Activated CD4-positive, alpha-beta T cell treated with anti-CD3 and anti-CD28 coated beads for 36 hours (primary cell): ENCODE measurements at regions of chr11 and their contacts with region 1.

Region 1: GRCh38 chr11:72030472-72031045 is 31.9 kb downstream of the IL18BP start:
- DNase-seq: no peak
- ATAC-seq: no peak
- H3K4me3 Mint-ChIP-seq: no peak overlapping the region
- H3K27ac Mint-ChIP-seq: peak overlapping the region; percentile 43
- H3K4me1 Mint-ChIP-seq: peaks cover 50% of the 10 kb centered on the region
- H3K27me3 Mint-ChIP-seq: no peaks in the 10 kb centered on the region

Region 2: GRCh38 chr11:71977743-71978418 is 52.7 kb before region 1 on chr11:
- CTCF ChIA-PET with region 1: interaction called, 18 read pairs
- POLR2A ChIA-PET with region 1: no interaction called
- intact Hi-C with region 1: no loop called
- DNase-seq: peak; percentile 69
- ATAC-seq: peak; percentile 63
- H3K4me3 Mint-ChIP-seq: no peak overlapping the region
- H3K27ac Mint-ChIP-seq: no peak overlapping the region
- H3K4me1 Mint-ChIP-seq: peaks cover 2% of the 10 kb centered on the region
- H3K27me3 Mint-ChIP-seq: no peaks in the 10 kb centered on the region

Region 3: DNA sequence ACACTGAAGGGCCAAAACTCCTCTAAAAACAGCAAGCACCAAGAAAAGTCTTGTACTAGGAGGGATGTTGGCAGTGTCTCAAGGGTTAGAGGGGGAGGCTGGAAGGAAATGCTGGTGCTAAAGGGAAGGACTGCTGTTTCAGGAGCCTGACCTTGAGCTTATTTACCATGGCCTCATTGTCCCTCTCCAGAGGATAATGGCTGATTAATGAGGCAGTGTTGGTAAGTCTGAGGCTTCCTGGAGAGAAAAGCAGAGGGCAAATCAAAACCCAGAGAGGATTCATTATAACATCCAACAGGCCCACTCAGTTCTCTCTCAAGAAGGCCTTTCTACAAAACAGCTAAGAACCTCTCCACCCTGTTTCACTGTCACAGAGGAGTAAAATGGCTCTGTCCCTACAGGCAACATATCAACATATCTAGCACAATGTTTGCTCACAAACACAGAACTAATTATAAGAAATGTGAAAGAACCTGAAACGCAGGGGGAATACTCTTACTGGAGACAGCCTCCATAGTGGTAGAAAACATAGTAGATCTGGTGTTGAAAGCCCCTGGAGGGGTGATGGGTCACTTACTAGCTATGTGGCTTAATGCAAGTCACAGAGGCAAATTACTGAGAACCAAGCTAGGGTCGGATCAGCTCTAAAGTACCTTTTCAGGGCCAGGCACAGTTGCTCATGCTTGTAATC is 18.4 kb after region 1 on chr11:
- CTCF ChIA-PET with region 1: interaction called, 16 read pairs
- POLR2A ChIA-PET with region 1: no interaction called
- intact Hi-C with region 1: no loop called
- DNase-seq: no peak
- ATAC-seq: no peak
- H3K4me3 Mint-ChIP-seq: no peak overlapping the region
- H3K27ac Mint-ChIP-seq: no peak overlapping the region
- H3K4me1 Mint-ChIP-seq: peaks cover 6% of the 10 kb centered on the region
- H3K27me3 Mint-ChIP-seq: no peaks in the 10 kb centered on the region

Region 4: GRCh38 chr11:72091005-72091691 is 60.6 kb after region 1 on chr11:
- CTCF ChIA-PET with region 1: interaction called, 89 read pairs
- POLR2A ChIA-PET with region 1: interaction called, 5 read pairs
- intact Hi-C with region 1: loop called (anchors 1 kb)
- DNase-seq: peak; percentile 82
- ATAC-seq: peak; percentile 90
- H3K4me3 Mint-ChIP-seq: no peak overlapping the region
- H3K27ac Mint-ChIP-seq: no peak overlapping the region
- H3K4me1 Mint-ChIP-seq: peaks cover 13% of the 10 kb centered on the region
- H3K27me3 Mint-ChIP-seq: no peaks in the 10 kb centered on the region

Region 5: GRCh38 chr11:72179804-72180396 is 149.3 kb after region 1 on chr11:
- CTCF ChIA-PET with region 1: interaction called, 15 read pairs
- POLR2A ChIA-PET with region 1: no interaction called
- intact Hi-C with region 1: loop called in 1 of 2 experiments (anchors 1 kb)
- DNase-seq: peak; percentile 16
- ATAC-seq: peak; percentile 56
- H3K4me3 Mint-ChIP-seq: no peak overlapping the region
- H3K27ac Mint-ChIP-seq: peak overlapping the region; percentile 12
- H3K4me1 Mint-ChIP-seq: peaks cover 12% of the 10 kb centered on the region
- H3K27me3 Mint-ChIP-seq: peaks cover 6% of the 10 kb centered on the region